Dendritic cell treated with granulocyte-macrophage colony-stimulating factor and Interleukin-4, amounts not matched to agents 40 ng/mL and 50 ng/mL, for 4 days (primary cell): ENCODE measurements at regions of chr6 and their contacts with region 1.

Region 1: GRCh38 chr6:152124429-152125074 is 317.1 kb downstream of the ESR1 start:
- H3K4me3 Mint-ChIP-seq: no peak overlapping the region
- H3K27ac Mint-ChIP-seq: no peak overlapping the region
- H3K4me1 Mint-ChIP-seq: peaks cover under 1% of the 10 kb centered on the region
- H3K27me3 Mint-ChIP-seq: no peaks in the 10 kb centered on the region

Region 2: GRCh38 chr6:151440930-151441329 is 683.6 kb before region 1 on chr6:
- intact Hi-C with region 1: loop called (anchors 1 kb)
- H3K4me3 Mint-ChIP-seq: no peak overlapping the region
- H3K27ac Mint-ChIP-seq: no peak overlapping the region
- H3K4me1 Mint-ChIP-seq: peaks cover 30% of the 10 kb centered on the region
- H3K27me3 Mint-ChIP-seq: no peaks in the 10 kb centered on the region

Region 3: GRCh38 chr6:151690768-151691562 is 433.6 kb before region 1 on chr6:
- intact Hi-C with region 1: loop called (anchors 10 kb)
- H3K4me3 Mint-ChIP-seq: peak overlapping the region; percentile 69
- H3K27ac Mint-ChIP-seq: peak overlapping the region; percentile 88
- H3K4me1 Mint-ChIP-seq: peaks cover 20% of the 10 kb centered on the region
- H3K27me3 Mint-ChIP-seq: no peaks in the 10 kb centered on the region

Region 4: DNA sequence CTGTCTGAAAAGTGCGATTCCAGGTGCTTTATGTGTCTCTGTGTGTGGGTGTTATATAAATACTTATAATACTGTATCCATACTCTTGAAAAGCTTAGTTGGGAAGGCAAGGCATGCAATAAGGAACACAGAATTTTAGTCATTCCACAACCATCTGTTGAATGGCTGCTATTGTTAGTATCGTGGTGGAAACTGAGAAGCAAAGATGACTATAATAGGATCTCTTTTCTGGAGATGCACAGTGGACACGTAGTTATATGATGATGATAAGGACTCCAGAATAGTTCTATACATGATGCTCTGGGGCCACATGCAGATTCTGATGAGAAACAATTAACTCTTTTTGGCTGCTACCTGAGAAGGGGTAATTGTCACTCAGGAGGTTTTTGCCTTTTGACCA is 291.8 kb before region 1 on chr6:
- intact Hi-C with region 1: no loop called
- H3K4me3 Mint-ChIP-seq: no peak overlapping the region
- H3K27ac Mint-ChIP-seq: no peak overlapping the region
- H3K4me1 Mint-ChIP-seq: no peaks in the 10 kb centered on the region
- H3K27me3 Mint-ChIP-seq: no peaks in the 10 kb centered on the region